ENCODE measurements at regions of chr18 and their contacts with region 1.

Region 1: GRCh38 chr18:54532217-54532616 is 58.8 kb upstream of the DYNAP start:
- DNase-seq: no peak
- ATAC-seq: no peak
- H3K4me3 ChIP-seq: no peak overlapping the region
- H3K4me3 Mint-ChIP-seq: no peak overlapping the region
- H3K27ac ChIP-seq: no peak overlapping the region
- H3K27ac Mint-ChIP-seq: no peak overlapping the region
- H3K4me1 ChIP-seq: no peaks in the 10 kb centered on the region
- H3K4me1 Mint-ChIP-seq: no peaks in the 10 kb centered on the region
- H3K27me3 ChIP-seq: peaks cover 0 to 7% of the 10 kb centered on the region in 2 experiments
- H3K27me3 Mint-ChIP-seq: peaks cover 16% of the 10 kb centered on the region
- CTCF ChIP-seq: no peak

Region 2: GRCh38 chr18:54580202-54580729 is 48.0 kb after region 1 on chr18:
- CTCF ChIA-PET with region 1: no interaction called
- POLR2A ChIA-PET with region 1: no interaction called
- intact Hi-C with region 1: loop called in 1 of 2 experiments (anchors 5 kb)
- DNase-seq: no peak
- ATAC-seq: no peak
- H3K4me3 ChIP-seq: no peak overlapping the region
- H3K4me3 Mint-ChIP-seq: no peak overlapping the region
- H3K27ac ChIP-seq: no peak overlapping the region
- H3K27ac Mint-ChIP-seq: no peak overlapping the region
- H3K4me1 ChIP-seq: no peaks in the 10 kb centered on the region
- H3K4me1 Mint-ChIP-seq: no peaks in the 10 kb centered on the region
- H3K27me3 ChIP-seq: no peaks in the 10 kb centered on the region
- H3K27me3 Mint-ChIP-seq: peaks cover 17% of the 10 kb centered on the region
- CTCF ChIP-seq: no peak